T-cell (primary cell): ENCODE measurements at regions of chr2 and their contacts with region 1.

Region 1: GRCh38 chr2:113248997-113249770 is 29.5 kb downstream of the PAX8 start:
- DNase-seq: peak; percentile 42 to 89 (median 68)
- ATAC-seq: peak; percentile 44 to 68 (median 46)
- H3K4me3 ChIP-seq: no peak overlapping the region
- H3K4me3 Mint-ChIP-seq: peak overlapping the region in 1 of 3 donors; percentile 79
- H3K27ac ChIP-seq: peak overlapping the region; percentile 42
- H3K27ac Mint-ChIP-seq: peak overlapping the region; percentile 91 to 93
- H3K4me1 ChIP-seq: peaks cover 37 to 41% of the 10 kb centered on the region in 2 experiments
- H3K4me1 Mint-ChIP-seq: peaks cover 51 to 55% (median 52%) of the 10 kb centered on the region in 3 donors
- H3K27me3 ChIP-seq: no peaks in the 10 kb centered on the region
- H3K27me3 Mint-ChIP-seq: no peaks in the 10 kb centered on the region

Region 2: GRCh38 chr2:113390124-113390849 is 141.1 kb after region 1 on chr2:
- CTCF ChIA-PET with region 1: interaction called in 1 of 2 experiments, 13 read pairs
- POLR2A ChIA-PET with region 1: no interaction called
- DNase-seq: peak; percentile 8 to 86 (median 44)
- ATAC-seq: peak; percentile 87 to 97 (median 90)
- H3K4me3 ChIP-seq: peak overlapping the region in 1 of 2 donors; percentile 40
- H3K4me3 Mint-ChIP-seq: peak overlapping the region; percentile 71 to 74 (median 73)
- H3K27ac ChIP-seq: no peak overlapping the region
- H3K27ac Mint-ChIP-seq: peak overlapping the region; percentile 73 to 78
- H3K4me1 ChIP-seq: peaks cover 2 to 4% of the 10 kb centered on the region in 2 experiments
- H3K4me1 Mint-ChIP-seq: peaks cover 6 to 15% (median 9%) of the 10 kb centered on the region in 3 donors
- H3K27me3 ChIP-seq: no peaks in the 10 kb centered on the region
- H3K27me3 Mint-ChIP-seq: peaks cover 7 to 15% of the 10 kb centered on the region in 2 donors